Ovary (tissue), 10 donors: ENCODE measurements at regions of chrX and their contacts with region 1.

Region 1: DNA sequence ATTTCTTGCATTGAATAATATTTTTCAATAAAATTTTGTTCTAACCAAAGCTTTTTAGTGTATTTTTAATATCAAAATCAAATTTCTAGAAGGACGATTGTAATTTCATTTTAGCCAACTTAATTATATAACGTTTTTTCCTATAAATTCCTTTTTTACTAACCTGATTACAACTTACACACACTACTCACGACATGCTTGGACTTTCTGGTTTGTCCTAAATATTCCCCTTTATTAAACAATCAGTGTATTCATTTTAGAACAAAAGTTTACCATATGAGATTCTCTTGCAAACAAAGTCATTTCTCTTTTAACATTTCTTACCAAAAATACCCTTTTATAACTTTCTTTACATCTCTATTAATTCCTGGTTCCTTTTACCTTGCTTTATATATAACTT is 173.7 kb downstream of the PWWP3B start:
- DNase-seq: no peak
- H3K4me3 ChIP-seq: no peak overlapping the region
- H3K27ac ChIP-seq: no peak overlapping the region
- H3K4me1 ChIP-seq: no peaks in the 10 kb centered on the region
- H3K27me3 ChIP-seq: no peaks in the 10 kb centered on the region
- CTCF ChIP-seq: no peak
- EP300 ChIP-seq: no peak
- POLR2A ChIP-seq: no peak

Region 2: DNA sequence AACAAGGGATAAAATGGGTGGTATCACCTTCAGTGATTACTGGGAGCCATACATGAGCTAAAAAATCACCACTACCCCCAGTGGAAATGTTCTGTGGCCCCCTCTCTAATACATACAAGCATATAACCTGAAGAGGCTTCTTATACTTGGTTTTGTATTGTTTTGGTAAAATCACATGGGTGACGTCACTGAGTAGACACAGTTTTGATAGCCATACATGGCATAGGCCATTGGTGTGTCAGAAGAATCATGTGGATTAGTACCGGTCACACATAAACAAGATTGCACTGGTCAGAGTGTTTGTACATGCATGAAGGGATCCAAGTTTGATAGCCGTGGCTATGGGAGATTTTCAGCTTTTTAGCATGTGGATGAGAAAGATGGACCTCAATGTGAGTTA is 138.1 kb after region 1 on chrX:
- intact Hi-C with region 1: loop called in 1 of 4 experiments (anchors 5 kb)
- DNase-seq: no peak
- H3K4me3 ChIP-seq: no peak overlapping the region
- H3K27ac ChIP-seq: no peak overlapping the region
- H3K4me1 ChIP-seq: no peaks in the 10 kb centered on the region
- H3K27me3 ChIP-seq: no peaks in the 10 kb centered on the region
- CTCF ChIP-seq: no peak
- EP300 ChIP-seq: no peak
- POLR2A ChIP-seq: no peak

Region 3: GRCh38 chrX:106752086-106752678 is 410.4 kb after region 1 on chrX:
- intact Hi-C with region 1: no loop called
- DNase-seq: no peak
- H3K4me3 ChIP-seq: no peak overlapping the region
- H3K27ac ChIP-seq: no peak overlapping the region
- H3K4me1 ChIP-seq: no peaks in the 10 kb centered on the region
- H3K27me3 ChIP-seq: no peaks in the 10 kb centered on the region
- CTCF ChIP-seq: no peak
- EP300 ChIP-seq: no peak
- POLR2A ChIP-seq: no peak

Region 4: DNA sequence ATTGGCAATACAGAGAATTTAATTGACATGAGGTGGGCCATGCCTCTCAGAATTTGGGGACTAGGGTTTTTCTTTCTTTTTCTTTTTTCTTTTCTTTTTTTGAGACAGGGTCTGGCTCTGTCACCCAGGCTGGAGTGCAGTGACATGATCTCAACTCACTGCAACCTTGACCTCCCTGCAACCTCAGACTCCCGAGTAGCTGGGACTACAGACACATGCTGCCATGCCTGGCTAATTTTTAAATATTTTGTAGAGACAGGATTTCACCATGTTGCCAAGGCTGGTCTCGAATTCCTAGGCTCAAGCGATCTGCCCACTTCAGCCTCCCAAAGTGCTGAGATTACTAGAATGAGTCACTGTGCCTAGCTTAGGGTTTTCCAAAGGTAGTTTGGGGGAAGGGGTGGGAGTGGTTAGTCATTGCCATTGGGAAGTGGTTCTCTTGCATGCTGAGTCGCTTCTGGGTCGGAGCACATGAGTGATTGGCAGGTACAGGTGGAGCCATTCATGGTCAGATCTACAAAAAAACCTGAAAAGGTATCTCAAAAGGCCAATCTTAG is 1538.3 kb after region 1 on chrX:
- intact Hi-C with region 1: loop called in 1 of 4 experiments (anchors 5 kb)
- DNase-seq: no peak
- H3K4me3 ChIP-seq: no peak overlapping the region
- H3K27ac ChIP-seq: no peak overlapping the region
- H3K4me1 ChIP-seq: no peaks in the 10 kb centered on the region
- H3K27me3 ChIP-seq: no peaks in the 10 kb centered on the region
- CTCF ChIP-seq: no peak
- EP300 ChIP-seq: no peak
- POLR2A ChIP-seq: no peak